Prostate gland (tissue), 2 donors: ENCODE measurements at regions of chr5 and their contacts with region 1.

Region 1: DNA sequence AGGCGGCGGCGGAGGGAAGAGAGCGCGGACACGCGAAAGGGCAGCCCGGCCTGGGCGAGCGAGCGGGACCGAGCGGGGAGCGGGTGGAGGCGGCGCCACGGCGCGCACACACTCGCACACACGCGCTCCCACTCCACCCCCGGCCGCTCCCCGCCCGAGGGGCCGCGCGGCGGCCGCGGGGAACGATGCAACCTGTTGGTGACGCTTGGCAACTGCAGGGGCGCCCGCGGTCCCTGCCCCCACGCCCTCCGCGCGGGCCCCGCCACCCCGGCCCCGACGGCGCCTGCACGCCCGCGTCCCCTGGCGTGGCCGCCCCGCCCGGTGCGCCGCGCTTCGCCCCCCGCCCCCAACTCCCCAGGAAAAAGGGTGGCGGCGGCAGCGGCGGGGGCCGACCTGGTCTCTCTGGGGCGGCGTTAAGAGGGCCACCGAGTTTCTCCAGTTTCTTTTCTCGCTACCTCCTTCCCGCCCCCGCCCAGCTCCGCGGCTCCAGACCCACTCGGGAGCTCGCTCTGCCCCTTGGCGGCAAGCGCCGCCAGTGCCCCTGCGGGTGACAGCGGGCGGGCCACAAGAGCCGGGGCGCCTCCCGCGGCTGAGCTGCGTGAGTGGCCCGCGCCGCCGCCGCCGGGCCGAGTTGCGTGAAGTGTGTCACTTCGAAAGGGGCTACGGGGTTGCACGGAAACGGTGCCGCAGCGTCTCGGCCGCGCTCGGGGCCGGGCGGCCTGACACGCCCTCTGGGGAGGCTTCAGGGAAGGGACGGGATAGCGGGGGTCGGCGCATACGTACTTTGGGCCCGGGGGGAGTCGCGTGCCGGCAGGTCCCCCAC is at the start of gene NR3C1:
- DNase-seq: peak; percentile 78
- H3K4me3 ChIP-seq: peak within 1 kb of the TSS; percentile 83 to 86
- H3K27ac ChIP-seq: peak within 1 kb of the TSS; percentile 95 to 96
- H3K4me1 ChIP-seq: no peaks in the 10 kb centered on the region
- H3K27me3 ChIP-seq: no peaks in the 10 kb centered on the region
- CTCF ChIP-seq: peak; percentile 24 to 65 (median 40)
- POLR2A ChIP-seq: peak; percentile 45
- total RNA-seq, gene NR3C1: 42.4 to 55.5 TPM

Region 2: DNA sequence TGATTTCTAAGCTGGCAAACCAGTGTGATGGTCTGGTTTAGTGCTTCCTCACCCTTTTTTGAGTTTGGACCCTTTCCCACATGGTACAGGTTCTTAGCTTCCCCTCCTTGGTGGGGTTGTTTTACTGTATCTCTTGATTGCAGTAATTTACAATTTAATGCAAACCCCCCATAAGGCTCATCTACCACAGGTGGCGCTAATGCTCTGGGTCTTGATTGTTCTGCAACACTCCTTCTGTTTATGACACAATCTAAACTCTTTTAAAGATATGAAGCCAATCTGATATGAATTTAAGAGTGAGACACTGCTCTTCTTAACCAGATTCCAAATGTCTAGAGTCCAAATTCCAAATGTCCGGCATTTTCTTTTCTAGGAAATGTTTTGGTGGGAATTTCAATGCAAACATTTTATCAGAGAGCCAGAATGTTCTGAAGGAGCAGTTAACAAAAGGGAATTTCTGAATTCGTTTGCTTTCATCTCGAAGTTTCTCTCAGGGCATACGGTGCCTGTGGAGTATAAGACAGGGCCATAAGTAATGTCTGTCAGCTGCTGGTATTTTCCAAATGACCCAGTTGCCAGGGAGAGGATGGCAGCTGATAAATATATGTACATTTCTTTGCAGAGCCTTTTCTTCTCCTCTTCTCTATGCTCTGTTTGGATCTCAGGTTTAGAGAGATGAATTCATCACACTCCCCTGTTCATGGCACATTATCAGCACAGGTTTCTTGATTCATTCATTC is 386.9 kb before region 1 on chr5:
- intact Hi-C with region 1: loop called (anchors 2 kb)
- DNase-seq: peak; percentile 39
- H3K4me3 ChIP-seq: no peak overlapping the region
- H3K27ac ChIP-seq: no peak overlapping the region
- H3K4me1 ChIP-seq: no peaks in the 10 kb centered on the region
- H3K27me3 ChIP-seq: no peaks in the 10 kb centered on the region
- CTCF ChIP-seq: peak in 3 of 4 experiments; percentile 47 to 59 (median 48)
- POLR2A ChIP-seq: no peak

Region 3: GRCh38 chr5:143106174-143106573 is 297.6 kb before region 1 on chr5:
- intact Hi-C with region 1: loop called (anchors 5 kb)
- DNase-seq: no peak
- H3K4me3 ChIP-seq: no peak overlapping the region
- H3K27ac ChIP-seq: no peak overlapping the region
- H3K4me1 ChIP-seq: peaks cover 14% of the 10 kb centered on the region
- H3K27me3 ChIP-seq: no peaks in the 10 kb centered on the region
- CTCF ChIP-seq: peak in 1 of 4 experiments; percentile 10
- POLR2A ChIP-seq: no peak

Region 4: GRCh38 chr5:143222287-143223231 is 181.2 kb before region 1 on chr5:
- intact Hi-C with region 1: loop called (anchors 10 kb)
- DNase-seq: no peak
- H3K4me3 ChIP-seq: no peak overlapping the region
- H3K27ac ChIP-seq: no peak overlapping the region
- H3K4me1 ChIP-seq: no peaks in the 10 kb centered on the region
- H3K27me3 ChIP-seq: no peaks in the 10 kb centered on the region
- CTCF ChIP-seq: no peak
- POLR2A ChIP-seq: no peak

Region 5: DNA sequence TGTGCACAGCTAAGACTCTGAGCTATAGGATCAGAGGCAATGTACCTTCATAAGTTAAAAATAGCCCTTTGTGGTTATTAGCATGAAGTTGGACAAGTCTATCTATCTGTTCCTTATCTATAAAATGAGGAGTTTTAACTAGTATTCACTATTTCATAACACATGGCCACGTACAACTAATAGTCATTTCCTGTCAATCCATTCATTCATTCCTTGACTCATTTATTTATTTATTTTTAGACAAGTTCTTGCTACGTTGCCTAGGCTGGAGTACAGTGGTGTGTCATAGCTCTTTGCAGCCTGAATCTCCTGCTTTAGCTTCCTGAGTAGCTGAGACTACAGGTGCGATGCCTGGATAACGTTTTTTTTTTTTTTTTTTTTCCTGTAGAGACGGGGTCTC is 92.4 kb before region 1 on chr5:
- intact Hi-C with region 1: no loop called
- DNase-seq: no peak
- H3K4me3 ChIP-seq: no peak overlapping the region
- H3K27ac ChIP-seq: no peak overlapping the region
- H3K4me1 ChIP-seq: no peaks in the 10 kb centered on the region
- H3K27me3 ChIP-seq: no peaks in the 10 kb centered on the region
- CTCF ChIP-seq: no peak
- POLR2A ChIP-seq: no peak

Region 6: DNA sequence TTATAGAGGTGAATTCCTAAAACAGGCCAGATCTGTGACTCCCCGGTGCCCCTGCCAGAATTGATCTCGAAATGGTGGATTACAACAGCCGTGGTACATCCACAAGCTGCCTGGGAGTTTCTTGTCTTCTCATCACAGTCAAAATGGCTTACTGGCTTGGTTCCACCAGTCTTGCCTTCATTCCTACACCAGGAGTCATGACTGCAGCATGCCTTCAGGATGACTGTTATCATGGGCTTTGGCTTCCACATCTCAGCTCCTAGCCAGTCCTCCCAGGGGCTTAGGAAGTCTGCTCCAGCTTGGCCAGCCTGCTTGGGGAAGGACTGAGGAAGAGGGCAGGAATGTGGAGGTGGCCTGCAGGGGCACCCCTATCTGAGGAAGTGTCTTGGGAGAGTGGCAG is 132.6 kb after region 1 on chr5:
- intact Hi-C with region 1: no loop called
- DNase-seq: no peak
- H3K4me3 ChIP-seq: no peak overlapping the region
- H3K27ac ChIP-seq: no peak overlapping the region
- H3K4me1 ChIP-seq: no peaks in the 10 kb centered on the region
- H3K27me3 ChIP-seq: no peaks in the 10 kb centered on the region
- CTCF ChIP-seq: no peak
- POLR2A ChIP-seq: no peak